Right cardiac atrium (tissue), 5 donors: ENCODE measurements at regions of chr6 and their contacts with region 1.

Region 1: GRCh38 chr6:163965426-163966348 is 551.2 kb downstream of the QKI start:
- DNase-seq: peak in 2 of 3 donors; percentile 59 to 67
- ATAC-seq: peak; percentile 55 to 64
- H3K4me3 ChIP-seq: no peak overlapping the region
- H3K27ac ChIP-seq: peak overlapping the region; percentile 65
- H3K4me1 ChIP-seq: peaks cover 3% of the 10 kb centered on the region
- H3K27me3 ChIP-seq: no peaks in the 10 kb centered on the region

Region 2: DNA sequence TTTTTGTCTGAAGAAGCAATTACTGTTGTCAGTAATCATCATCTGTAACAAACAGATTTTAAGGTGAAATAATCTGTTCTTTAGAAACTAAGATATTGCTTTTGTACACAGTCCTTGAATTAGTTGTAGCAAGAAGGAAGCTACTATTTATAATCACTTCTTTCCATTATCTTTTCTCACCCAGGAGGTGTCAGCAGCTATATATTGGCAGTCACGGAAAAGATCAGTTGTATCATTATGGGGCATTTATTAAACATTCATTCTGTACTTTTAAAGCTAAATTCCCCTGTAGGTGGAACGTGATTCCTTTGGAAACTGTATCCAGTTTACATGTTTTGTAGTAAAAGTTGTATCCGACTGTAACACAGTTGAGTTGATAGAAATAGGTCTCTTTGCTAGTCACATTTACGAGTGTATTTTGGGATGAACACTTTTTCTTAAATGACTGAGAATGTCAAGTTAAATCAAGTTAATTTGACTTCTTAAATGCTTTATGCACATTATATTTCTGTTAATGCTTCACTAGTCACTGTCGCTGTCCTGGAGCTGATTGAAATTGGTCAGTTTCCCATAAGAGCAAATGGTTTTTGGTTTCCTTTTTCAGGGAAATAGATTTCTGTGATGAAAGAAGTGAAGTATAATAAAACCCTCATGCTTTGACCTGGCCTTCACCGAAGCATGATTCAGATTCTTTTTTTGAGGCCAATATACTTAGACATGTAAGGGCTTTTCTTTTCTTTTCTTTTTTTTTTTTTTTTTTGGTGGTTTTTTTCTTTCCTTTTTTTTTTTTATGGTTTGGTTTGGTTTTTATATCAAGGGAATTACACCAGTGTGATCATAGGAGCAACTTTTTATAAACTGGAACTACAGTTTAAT is 546.0 kb before region 1 on chr6:
- intact Hi-C with region 1: loop called in 1 of 4 experiments (anchors 5 kb)
- DNase-seq: no peak
- ATAC-seq: no peak
- H3K4me3 ChIP-seq: peak overlapping the region; percentile 100
- H3K27ac ChIP-seq: no peak overlapping the region
- H3K4me1 ChIP-seq: peaks cover 6% of the 10 kb centered on the region
- H3K27me3 ChIP-seq: no peaks in the 10 kb centered on the region

Region 3: GRCh38 chr6:164066335-164066734 is 100.6 kb after region 1 on chr6:
- intact Hi-C with region 1: no loop called
- DNase-seq: no peak
- ATAC-seq: no peak
- H3K4me3 ChIP-seq: no peak overlapping the region
- H3K27ac ChIP-seq: no peak overlapping the region
- H3K4me1 ChIP-seq: no peaks in the 10 kb centered on the region
- H3K27me3 ChIP-seq: no peaks in the 10 kb centered on the region

Region 4: DNA sequence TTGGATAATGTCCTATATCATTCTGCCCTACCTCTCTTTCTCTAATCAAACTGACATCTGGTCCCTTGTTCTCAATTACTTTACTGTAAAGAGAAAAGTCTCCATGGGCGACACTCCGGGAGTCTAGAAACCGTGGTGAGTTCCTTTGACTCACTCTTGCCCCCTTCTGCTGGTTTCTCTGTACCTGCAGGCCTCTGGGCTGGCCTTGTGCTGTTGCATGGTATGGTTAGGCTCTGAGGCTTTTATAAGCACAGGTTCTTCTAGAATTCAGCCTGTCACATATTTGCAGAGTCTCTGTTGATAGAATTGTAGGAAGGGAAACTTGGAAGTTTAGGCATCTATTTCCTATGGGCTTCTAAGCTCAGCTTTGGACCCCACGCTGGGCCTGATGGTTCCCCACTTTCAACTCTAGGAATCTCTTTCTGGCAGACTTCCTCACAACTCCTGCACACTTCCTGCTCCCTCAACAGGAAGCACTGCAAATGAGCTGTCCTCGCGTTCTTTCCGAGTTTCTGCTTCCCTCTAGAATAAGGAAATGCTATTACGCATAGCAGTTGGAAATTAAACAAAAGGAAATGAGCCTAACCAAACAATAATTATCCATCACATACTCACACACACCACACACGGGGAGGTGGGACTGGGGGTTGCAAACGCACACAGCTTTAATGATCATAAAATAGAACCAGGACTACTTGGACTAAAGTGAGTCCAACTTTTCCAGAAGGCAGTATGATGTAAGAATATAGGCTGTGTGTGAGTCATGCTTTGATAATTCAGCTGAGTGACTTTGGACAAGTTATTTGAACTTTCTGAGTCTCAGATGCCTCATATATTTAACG is 132.1 kb after region 1 on chr6:
- intact Hi-C with region 1: loop called in 2 of 4 experiments (anchors 5 to 10 kb)
- DNase-seq: peak in 1 of 3 donors; percentile 51
- ATAC-seq: peak; percentile 23 to 70
- H3K4me3 ChIP-seq: no peak overlapping the region
- H3K27ac ChIP-seq: peak overlapping the region; percentile 93
- H3K4me1 ChIP-seq: peaks cover 6% of the 10 kb centered on the region
- H3K27me3 ChIP-seq: no peaks in the 10 kb centered on the region